ENCODE measurements at regions of chrX and their contacts with region 1.

Region 1: DNA sequence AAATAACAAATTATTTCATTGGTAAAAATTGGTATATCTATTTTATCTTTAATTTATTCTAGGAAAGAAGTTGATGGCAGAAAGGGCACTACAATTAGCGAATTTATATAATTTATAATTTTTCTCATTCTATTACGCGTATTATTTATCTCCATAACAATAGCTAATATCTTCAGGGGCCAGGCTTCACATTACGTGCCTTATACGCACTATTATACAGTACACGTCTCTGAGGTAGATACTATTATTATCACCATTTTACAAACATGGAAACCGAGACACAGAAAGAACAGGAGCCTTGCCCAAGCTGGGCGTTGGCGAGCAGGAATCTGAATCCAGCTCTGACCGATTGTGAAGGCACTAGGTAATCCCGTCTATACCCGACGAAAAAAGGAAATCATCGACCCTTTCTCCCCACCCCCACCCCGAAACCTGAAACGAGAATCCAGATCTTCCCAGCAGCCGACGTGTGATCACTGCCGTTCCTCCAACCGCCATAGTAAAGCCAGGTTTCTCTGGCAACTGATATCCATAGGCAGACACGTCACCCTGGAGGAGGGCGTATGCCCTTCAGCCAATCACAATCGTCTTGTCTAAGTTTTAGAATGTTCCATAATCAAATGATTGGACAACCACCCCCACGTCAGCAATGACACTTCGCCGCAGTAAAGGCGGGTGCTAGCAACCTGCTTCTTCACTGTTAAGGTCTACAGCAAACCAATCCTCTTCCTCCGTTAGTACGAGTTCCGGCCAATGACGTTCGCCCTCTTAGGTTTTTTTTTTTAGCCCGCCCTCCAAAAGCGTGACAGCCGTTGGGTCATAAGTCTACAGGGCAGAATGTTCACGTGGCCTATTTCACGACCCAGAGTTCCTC is at the start of gene MORF4L2:
- DNase-seq: peak; percentile 96
- H3K4me3 Mint-ChIP-seq: no peak within 1 kb of the TSS
- H3K27ac Mint-ChIP-seq: no peak within 1 kb of the TSS
- H3K4me1 Mint-ChIP-seq: peaks cover 5% of the 10 kb centered on the region
- H3K27me3 Mint-ChIP-seq: peaks cover 11% of the 10 kb centered on the region
- CTCF ChIP-seq: no peak
- total RNA-seq, gene MORF4L2: 463 and 496 TPM in 2 replicates

Region 2: DNA sequence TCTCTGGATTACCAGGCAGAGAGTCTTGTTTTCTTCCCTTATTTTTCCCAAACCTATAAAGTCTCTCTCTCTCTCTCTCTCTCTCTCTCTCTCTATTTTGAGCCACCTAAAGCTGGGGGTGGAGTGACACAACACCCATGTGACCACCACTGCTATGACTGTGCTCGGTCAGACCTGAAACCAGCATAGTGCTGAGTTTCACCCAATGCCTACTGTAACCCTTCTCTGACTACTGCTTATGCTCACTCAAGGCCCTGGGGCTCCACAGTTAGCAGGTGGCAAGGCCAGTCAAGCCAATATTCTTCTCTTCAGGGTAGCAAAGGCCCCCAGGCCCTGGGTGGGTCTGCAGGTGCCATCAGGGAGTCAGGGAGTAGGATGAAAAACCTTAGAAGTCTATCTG is 1912.1 kb before region 1 on chrX:
- CTCF ChIA-PET with region 1: no interaction called
- POLR2A ChIA-PET with region 1: no interaction called
- intact Hi-C with region 1: no loop called
- DNase-seq: no peak
- H3K4me3 Mint-ChIP-seq: no peak overlapping the region
- H3K27ac Mint-ChIP-seq: no peak overlapping the region
- H3K4me1 Mint-ChIP-seq: no peaks in the 10 kb centered on the region
- H3K27me3 Mint-ChIP-seq: peaks cover 12% of the 10 kb centered on the region
- CTCF ChIP-seq: no peak

Region 3: DNA sequence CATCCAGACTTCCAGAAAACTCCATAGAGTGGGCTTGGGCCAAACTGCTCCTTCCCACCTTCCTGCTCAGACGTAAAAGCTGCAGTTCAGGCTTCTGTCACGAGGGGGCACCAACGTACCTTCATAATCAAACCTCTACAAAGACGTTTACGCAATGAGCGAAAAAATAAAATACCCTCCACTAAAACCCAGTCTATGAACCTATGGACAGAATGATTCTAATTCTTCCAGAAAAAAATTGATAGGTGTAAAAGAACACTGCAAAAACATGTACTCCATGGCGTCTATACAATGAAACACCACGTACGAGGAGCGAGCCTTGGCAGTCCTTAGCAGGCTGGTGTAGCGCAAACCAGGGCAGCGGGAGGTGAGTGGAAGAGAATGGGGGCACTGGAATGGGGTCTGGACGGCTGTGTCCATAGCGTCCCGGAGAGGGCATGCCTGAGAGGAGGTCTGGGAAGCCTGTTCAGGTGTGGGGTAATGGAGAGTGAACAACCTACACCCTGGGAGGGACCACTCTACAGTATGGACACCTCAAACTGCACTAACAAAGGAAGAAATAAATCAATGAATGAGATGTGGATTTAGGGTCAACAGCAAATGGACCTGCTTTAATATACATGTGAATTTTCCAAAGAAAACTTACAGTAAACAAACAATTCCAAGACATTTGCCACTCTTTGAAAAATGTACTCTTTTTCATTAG is 152.8 kb before region 1 on chrX:
- CTCF ChIA-PET with region 1: interaction called, 6 read pairs
- POLR2A ChIA-PET with region 1: interaction called, 15 read pairs
- intact Hi-C with region 1: loop called (anchors 1 kb)
- DNase-seq: peak; percentile 74
- H3K4me3 Mint-ChIP-seq: peak overlapping the region; percentile 24
- H3K27ac Mint-ChIP-seq: peak overlapping the region; percentile 57
- H3K4me1 Mint-ChIP-seq: peaks cover 14% of the 10 kb centered on the region
- H3K27me3 Mint-ChIP-seq: peaks cover 64% of the 10 kb centered on the region
- CTCF ChIP-seq: peak; percentile 85

Region 4: GRCh38 chrX:103585411-103586313 is 100.8 kb before region 1 on chrX and contains the start of gene TCEAL4:
- CTCF ChIA-PET with region 1: interaction called, 3 read pairs
- POLR2A ChIA-PET with region 1: interaction called, 7 read pairs
- intact Hi-C with region 1: loop called (anchors 5 kb)
- DNase-seq: peak; percentile 38
- H3K4me3 Mint-ChIP-seq: peak within 1 kb of the TSS; percentile 88
- H3K27ac Mint-ChIP-seq: peak within 1 kb of the TSS; percentile 80
- H3K4me1 Mint-ChIP-seq: peaks cover 7% of the 10 kb centered on the region
- H3K27me3 Mint-ChIP-seq: peaks cover 35% of the 10 kb centered on the region
- CTCF ChIP-seq: no peak
- total RNA-seq, gene TCEAL4: 63.7 and 64.4 TPM in 2 replicates

Region 5: DNA sequence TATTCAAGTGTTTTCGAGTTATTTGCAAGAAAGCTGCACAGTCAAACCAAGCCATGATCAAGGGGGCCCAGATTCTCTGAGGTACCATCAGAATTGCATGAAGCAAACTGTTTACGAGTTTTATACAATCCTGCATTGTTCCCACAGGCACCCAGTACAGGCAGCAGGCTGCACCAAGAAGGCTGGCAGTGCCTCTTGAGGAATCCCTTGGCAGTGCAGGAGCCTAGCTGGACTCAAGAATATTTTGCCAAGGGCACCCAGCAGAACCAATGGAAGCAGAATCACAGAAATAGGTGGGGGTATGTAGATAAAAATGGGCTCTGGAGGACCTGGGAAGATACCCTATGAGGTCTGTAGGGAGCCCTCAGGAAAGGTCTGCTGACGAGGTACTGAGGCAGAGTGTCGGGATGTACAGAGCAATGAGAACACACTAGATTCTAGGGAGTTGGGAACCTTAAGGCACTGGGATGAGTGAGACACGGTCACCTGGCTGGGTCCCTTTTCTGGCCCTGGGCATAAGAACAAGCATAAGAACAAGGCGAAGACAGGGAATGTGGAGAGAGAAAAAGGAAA is 87.7 kb after region 1 on chrX:
- CTCF ChIA-PET with region 1: interaction called, 30 read pairs
- POLR2A ChIA-PET with region 1: no interaction called
- intact Hi-C with region 1: loop called (anchors 1 kb)
- DNase-seq: peak; percentile 64
- H3K4me3 Mint-ChIP-seq: no peak overlapping the region
- H3K27ac Mint-ChIP-seq: no peak overlapping the region
- H3K4me1 Mint-ChIP-seq: no peaks in the 10 kb centered on the region
- H3K27me3 Mint-ChIP-seq: peaks cover 62% of the 10 kb centered on the region
- CTCF ChIP-seq: peak; percentile 36

Region 6: DNA sequence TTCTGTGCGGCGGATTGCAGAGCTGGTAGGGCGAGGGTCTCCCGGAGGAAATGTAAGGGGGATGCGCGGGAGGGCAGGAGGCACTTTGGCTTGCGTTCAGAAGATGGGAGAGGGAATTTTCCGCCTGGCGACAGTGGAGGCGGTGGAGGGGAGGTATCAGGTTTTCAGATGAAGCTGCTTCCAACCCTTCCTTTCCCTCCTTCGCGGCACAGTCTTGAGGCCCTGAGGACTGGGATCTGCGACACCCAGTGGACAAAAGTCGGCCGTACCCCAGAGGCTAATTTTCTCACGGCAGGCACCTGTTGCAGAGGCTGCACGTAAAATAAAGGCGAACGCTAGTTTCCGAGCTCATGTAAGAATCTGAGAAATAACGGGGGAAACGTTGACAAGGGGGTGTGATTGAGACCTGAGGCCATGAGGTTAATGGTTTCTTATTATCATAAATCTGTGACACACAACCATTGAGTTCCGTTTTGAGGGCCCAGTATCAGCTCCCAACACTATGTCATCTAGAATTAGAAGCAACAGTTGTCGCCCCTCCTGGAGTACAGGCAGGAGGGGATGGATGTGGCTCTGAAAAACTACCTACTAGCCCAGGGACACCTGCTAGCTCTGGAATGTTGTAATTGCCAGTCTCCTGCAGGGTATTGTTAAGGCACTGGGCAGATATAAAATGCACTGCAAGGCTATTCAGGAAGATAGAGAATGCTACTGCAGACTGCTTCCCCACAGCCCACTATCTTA is 427.0 kb after region 1 on chrX:
- CTCF ChIA-PET with region 1: no interaction called
- POLR2A ChIA-PET with region 1: no interaction called
- intact Hi-C with region 1: loop called (anchors 2 kb)
- DNase-seq: peak; percentile 63
- H3K4me3 Mint-ChIP-seq: peak overlapping the region; percentile 76
- H3K27ac Mint-ChIP-seq: no peak overlapping the region
- H3K4me1 Mint-ChIP-seq: peaks cover 8% of the 10 kb centered on the region
- H3K27me3 Mint-ChIP-seq: peaks cover 80% of the 10 kb centered on the region
- CTCF ChIP-seq: peak; percentile 29

Measured in MCF 10A (cell line).